ENCODE measurements at regions of chrX and their contacts with region 1.

Region 1: GRCh38 chrX:1453951-1454785 is 1.5 kb upstream of the ASMTL start:
- DNase-seq: peak; percentile 87
- ATAC-seq: peak; percentile 20 to 41

Region 2: GRCh38 chrX:1380672-1381233 is 73.4 kb before region 1 on chrX:
- intact Hi-C with region 1: no loop called
- DNase-seq: no peak
- ATAC-seq: peak; percentile 4 to 17

Region 3: GRCh38 chrX:1582686-1583437 is 128.7 kb after region 1 on chrX:
- intact Hi-C with region 1: loop called in 1 of 2 experiments (anchors 2 kb)
- DNase-seq: no peak
- ATAC-seq: no peak

Region 4: GRCh38 chrX:1673337-1673736 is 219.2 kb after region 1 on chrX:
- intact Hi-C with region 1: no loop called
- DNase-seq: no peak
- ATAC-seq: no peak

Region 5: GRCh38 chrX:2325076-2325784 is 871.1 kb after region 1 on chrX:
- intact Hi-C with region 1: loop called in 1 of 2 experiments (anchors 10 kb)
- DNase-seq: peak; percentile 88
- ATAC-seq: peak; percentile 69 to 77

Measured in left cardiac atrium (tissue), 4 donors.